ENCODE measurements at regions of chr1 and their contacts with region 1.

Region 1: DNA sequence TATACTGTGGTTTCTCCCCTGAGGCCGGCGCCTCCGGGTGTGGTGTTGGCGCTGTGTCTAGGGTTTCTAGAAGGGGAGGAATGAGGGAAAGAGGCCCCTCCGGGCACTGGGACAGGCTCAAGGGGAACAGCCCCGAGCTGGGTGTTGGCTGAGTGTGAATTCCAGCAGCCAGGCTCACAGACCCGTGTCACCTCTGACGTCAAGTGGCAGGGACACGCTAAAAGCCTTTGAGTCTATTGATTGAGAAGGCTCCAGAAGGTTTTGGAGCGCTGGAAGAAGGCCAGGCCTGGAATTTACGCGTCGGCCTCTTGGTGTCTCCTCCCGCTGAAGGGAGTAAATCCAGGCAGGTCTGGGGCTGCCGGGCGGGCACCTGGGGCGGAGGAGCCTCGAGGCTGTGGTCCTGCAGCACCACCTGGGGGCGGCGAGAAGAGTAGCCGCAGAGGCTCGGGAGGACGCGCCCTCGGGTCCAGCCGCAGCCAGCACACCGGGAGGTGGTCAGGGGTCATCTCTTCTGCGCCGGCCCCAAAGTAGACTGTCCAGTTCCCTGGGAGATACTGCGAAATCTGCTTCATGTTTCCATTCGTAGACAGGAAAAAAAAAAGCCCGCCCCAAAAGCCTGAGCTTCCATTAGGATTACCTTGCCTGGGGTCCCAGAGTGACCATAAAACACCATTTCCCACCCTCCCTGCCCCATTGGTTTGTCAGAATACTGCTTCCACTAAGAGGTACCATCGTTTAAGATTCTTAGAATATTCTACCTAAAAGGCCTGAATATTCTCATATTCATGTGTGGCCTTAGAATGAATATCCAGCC is 61.7 kb downstream of the TLR5 start:
- DNase-seq: peak; percentile 88
- ATAC-seq: peak; percentile 98
- H3K4me3 ChIP-seq: peak overlapping the region; percentile 6 to 67 (median 34); a peak in 5 of 6 replicates
- H3K27ac ChIP-seq: no peak overlapping the region
- H3K4me1 ChIP-seq: no peaks in the 10 kb centered on the region
- H3K27me3 ChIP-seq: peaks cover 0 to 11% of the 10 kb centered on the region in 2 experiments; a peak in 2 of 5 replicates
- CTCF ChIP-seq: peak; percentile 98
- EP300 ChIP-seq: peak in 1 of 2 experiments; percentile 25; a peak in 2 of 4 replicates
- POLR2A ChIP-seq: no peak
- RAD21 ChIP-seq: peak; percentile 99

Region 2: GRCh38 chr1:222465211-222466041 is 616.0 kb before region 1 on chr1:
- CTCF ChIA-PET with region 1: no interaction called
- POLR2A ChIA-PET with region 1: no interaction called
- in situ Hi-C with region 1: loop called (anchors 25 kb)
- intact Hi-C with region 1: no loop called
- DNase-seq: peak; percentile 91
- ATAC-seq: peak; percentile 99
- H3K4me3 ChIP-seq: peak overlapping the region; percentile 60 to 81 (median 74)
- H3K27ac ChIP-seq: peak overlapping the region; percentile 99
- H3K4me1 ChIP-seq: peaks cover 42% of the 10 kb centered on the region
- H3K27me3 ChIP-seq: no peaks in the 10 kb centered on the region
- CTCF ChIP-seq: peak; percentile 98
- EP300 ChIP-seq: no peak
- POLR2A ChIP-seq: peak; percentile 72 to 82
- RAD21 ChIP-seq: peak; percentile 100

Region 3: DNA sequence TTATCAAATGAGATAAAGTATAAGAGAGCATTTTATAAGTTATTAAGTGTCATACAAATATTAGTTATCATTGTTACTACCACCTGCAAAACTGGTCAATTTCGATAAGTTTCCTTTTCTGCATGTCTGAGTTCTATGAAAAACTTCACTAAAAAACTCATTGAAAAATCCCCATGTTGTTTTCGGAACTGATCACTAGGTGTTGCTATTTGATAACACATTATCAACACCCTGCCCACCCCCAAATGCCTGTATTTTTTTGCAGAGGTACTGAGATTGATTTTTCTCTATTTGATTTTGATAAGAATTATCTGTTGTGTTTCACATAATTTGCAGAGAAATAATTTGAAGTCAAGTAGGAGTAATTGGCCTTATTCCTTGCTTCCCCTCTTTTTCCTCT is 288.6 kb before region 1 on chr1:
- CTCF ChIA-PET with region 1: interaction called, 49 read pairs
- POLR2A ChIA-PET with region 1: no interaction called
- in situ Hi-C with region 1: loop called (anchors 5 kb)
- intact Hi-C with region 1: loop called (anchors 1 kb)
- DNase-seq: no peak
- ATAC-seq: no peak
- H3K4me3 ChIP-seq: no peak overlapping the region
- H3K27ac ChIP-seq: no peak overlapping the region
- H3K4me1 ChIP-seq: peaks cover under 1% of the 10 kb centered on the region; the same call in 1 of the 2 replicates
- H3K27me3 ChIP-seq: no peaks in the 10 kb centered on the region
- CTCF ChIP-seq: peak; percentile 66
- EP300 ChIP-seq: no peak
- POLR2A ChIP-seq: no peak
- RAD21 ChIP-seq: peak; percentile 66

Region 4: GRCh38 chr1:223006917-223007648 is 74.3 kb before region 1 on chr1:
- CTCF ChIA-PET with region 1: no interaction called
- POLR2A ChIA-PET with region 1: no interaction called
- in situ Hi-C with region 1: no loop called
- intact Hi-C with region 1: loop called (anchors 2 kb)
- DNase-seq: peak; percentile 46
- ATAC-seq: peak; percentile 85
- H3K4me3 ChIP-seq: peak overlapping the region in 1 of 3 experiments; percentile 15; a peak in 1 of 6 replicates
- H3K27ac ChIP-seq: peak overlapping the region; percentile 23
- H3K4me1 ChIP-seq: peaks cover 52% of the 10 kb centered on the region
- H3K27me3 ChIP-seq: no peaks in the 10 kb centered on the region
- CTCF ChIP-seq: no peak
- EP300 ChIP-seq: no peak
- POLR2A ChIP-seq: no peak
- RAD21 ChIP-seq: no peak

Region 5: GRCh38 chr1:223123011-223123610 is 41.7 kb after region 1 on chr1:
- CTCF ChIA-PET with region 1: interaction called, 4 read pairs
- POLR2A ChIA-PET with region 1: no interaction called
- in situ Hi-C with region 1: no loop called
- intact Hi-C with region 1: loop called (anchors 5 kb)
- DNase-seq: no peak
- ATAC-seq: no peak
- H3K4me3 ChIP-seq: peak overlapping the region in 2 of 3 experiments; percentile 6 to 7; a peak in 1 of 6 replicates
- H3K27ac ChIP-seq: no peak overlapping the region
- H3K4me1 ChIP-seq: peaks cover 9% of the 10 kb centered on the region
- H3K27me3 ChIP-seq: peaks cover 1 to 4% of the 10 kb centered on the region in 2 experiments; a peak in 2 of 5 replicates
- CTCF ChIP-seq: no peak
- EP300 ChIP-seq: no peak
- POLR2A ChIP-seq: no peak
- RAD21 ChIP-seq: no peak